Endothelial cell of umbilical vein (primary cell): ENCODE measurements at regions of chr2 and their contacts with region 1.

Region 1: GRCh38 chr2:9675415-9676351 is 44.9 kb upstream of the YWHAQ start:
- DNase-seq: peak; percentile 62
- H3K4me3 ChIP-seq: no peak overlapping the region
- H3K27ac ChIP-seq: peak overlapping the region; percentile 43
- H3K4me1 ChIP-seq: peaks cover 14% of the 10 kb centered on the region
- H3K27me3 ChIP-seq: no peaks in the 10 kb centered on the region
- CTCF ChIP-seq: no peak
- POLR2A ChIP-seq: no peak

Region 2: DNA sequence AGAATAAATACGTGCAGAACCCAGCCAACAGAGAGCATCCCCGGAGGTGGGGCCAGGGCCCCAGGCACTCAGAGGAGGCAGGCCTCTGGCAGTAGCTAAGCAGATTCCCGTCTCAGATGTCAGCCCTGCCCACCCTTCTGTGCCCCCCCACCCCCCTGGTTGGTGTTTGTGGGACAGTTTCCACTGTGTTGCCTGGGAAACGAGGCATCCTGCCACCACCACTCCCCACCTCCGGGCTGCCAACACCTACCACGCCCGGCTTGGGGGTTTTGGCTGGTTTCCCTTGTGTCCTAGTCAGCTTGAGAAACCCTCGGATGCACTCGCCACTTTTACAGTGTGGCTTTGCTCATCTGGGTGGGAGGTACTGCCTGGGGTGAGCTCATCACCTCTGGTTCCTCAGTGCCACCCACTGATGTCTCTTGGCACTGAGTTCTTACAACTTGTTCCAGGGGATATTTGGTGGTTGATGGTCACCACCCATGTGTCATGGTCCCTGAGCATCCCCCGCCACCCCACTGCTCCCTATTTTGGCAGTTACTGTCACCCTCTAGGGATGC is 27.5 kb after region 1 on chr2:
- CTCF ChIA-PET with region 1: interaction called, 4 read pairs
- POLR2A ChIA-PET with region 1: no interaction called
- dilution Hi-C with region 1: no loop called
- intact Hi-C with region 1: loop called (anchors 2 kb)
- DNase-seq: no peak
- H3K4me3 ChIP-seq: no peak overlapping the region
- H3K27ac ChIP-seq: no peak overlapping the region
- H3K4me1 ChIP-seq: peaks cover 7% of the 10 kb centered on the region
- H3K27me3 ChIP-seq: peaks cover 0 to 3% of the 10 kb centered on the region in 2 experiments
- CTCF ChIP-seq: no peak
- POLR2A ChIP-seq: no peak